Dorsolateral prefrontal cortex (tissue), 120 donors: ENCODE measurements at regions of chr16 and their contacts with region 1.

Region 1: DNA sequence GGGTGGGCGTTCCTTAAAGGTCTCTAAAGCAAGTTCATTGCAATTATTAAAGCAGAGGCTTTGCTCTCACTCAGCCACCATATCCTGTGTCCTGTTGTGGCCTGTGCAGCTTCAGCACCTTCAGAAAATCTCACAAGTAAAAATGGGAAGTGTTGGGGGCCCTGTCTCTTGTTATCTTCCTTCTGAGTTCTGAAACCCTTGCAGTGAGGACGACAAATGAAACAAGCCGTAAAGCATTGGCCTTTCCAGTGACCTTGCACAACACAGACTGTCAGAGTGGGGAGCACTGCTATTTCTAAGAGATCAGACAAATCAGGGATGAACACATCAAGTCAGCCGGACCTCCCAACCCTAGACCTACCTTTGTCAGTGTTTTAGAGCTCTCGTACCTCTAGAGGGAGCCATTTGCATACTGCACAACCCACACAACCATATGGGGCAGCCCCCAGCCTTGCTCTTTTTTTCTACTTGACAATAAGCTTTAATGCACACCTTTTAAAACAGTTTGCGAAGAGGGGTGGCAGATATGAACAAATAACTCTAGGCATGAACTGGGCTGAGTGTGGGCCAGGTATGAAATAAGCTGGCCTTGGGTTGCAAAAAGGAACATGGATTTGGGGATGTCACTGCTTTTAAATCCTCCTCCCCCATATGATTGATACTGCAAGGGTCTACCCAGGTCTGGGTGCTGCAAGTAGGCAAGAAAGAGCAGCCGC is 89.8 kb downstream of the KATNIP start:
- DNase-seq: peak in 5 of 10 donors; percentile 16 to 58 (median 43)
- H3K4me3 ChIP-seq: no peak overlapping the region
- H3K27ac ChIP-seq: peak overlapping the region in 1 of 59 donors; percentile 14
- H3K27me3 ChIP-seq: no peaks in the 10 kb centered on the region
- CTCF ChIP-seq: peak in 55 of 56 donors; percentile 26 to 78 (median 64)

Region 2: DNA sequence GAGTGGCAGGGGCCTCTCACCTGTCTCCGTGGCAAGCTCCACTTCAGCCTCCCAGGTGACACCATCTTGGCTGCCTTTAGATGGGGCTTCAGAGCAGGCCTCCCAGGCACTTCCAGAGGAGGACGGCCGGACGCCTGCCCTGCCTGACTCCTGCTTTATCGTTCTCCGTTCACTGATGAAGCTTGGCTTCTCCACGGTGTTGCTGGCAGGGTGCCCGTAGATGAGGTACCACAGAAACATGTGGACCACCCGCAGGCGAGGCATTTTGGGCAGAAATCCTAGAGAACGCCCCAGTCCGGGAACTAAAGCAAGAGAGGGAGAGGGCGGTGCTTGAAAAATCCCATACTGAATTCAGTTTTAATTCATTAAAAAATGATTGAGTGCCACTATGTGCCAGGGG is 144.5 kb before region 1 on chr16:
- intact Hi-C with region 1: no loop called
- DNase-seq: peak in 1 of 10 donors; percentile 67
- H3K4me3 ChIP-seq: no peak overlapping the region
- H3K27ac ChIP-seq: peak overlapping the region in 1 of 59 donors; percentile 22
- H3K27me3 ChIP-seq: no peaks in the 10 kb centered on the region
- CTCF ChIP-seq: no peak

Region 3: DNA sequence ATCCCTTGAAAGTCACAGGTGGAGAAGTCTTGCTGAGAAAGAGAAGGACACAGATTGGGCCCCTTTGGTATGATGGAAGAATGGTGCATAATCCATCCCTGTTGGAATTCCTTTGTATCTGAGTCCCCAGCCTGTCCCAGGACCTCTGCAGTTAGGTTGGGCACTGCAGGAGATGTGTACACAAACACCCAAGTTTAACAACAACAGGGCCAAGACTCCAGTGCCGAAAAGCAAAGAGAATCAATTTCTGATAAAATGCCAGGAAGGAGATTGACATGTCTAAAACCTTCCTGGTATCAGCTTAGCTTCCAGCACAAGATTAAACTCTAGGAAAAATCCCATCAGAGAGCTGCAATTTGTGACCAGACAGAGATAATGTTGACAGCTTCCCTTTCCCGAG is 56.8 kb before region 1 on chr16:
- intact Hi-C with region 1: loop called in 1 of 2 experiments (anchors 10 kb)
- DNase-seq: no peak
- H3K4me3 ChIP-seq: no peak overlapping the region
- H3K27ac ChIP-seq: no peak overlapping the region
- H3K27me3 ChIP-seq: no peaks in the 10 kb centered on the region
- CTCF ChIP-seq: no peak

Region 4: DNA sequence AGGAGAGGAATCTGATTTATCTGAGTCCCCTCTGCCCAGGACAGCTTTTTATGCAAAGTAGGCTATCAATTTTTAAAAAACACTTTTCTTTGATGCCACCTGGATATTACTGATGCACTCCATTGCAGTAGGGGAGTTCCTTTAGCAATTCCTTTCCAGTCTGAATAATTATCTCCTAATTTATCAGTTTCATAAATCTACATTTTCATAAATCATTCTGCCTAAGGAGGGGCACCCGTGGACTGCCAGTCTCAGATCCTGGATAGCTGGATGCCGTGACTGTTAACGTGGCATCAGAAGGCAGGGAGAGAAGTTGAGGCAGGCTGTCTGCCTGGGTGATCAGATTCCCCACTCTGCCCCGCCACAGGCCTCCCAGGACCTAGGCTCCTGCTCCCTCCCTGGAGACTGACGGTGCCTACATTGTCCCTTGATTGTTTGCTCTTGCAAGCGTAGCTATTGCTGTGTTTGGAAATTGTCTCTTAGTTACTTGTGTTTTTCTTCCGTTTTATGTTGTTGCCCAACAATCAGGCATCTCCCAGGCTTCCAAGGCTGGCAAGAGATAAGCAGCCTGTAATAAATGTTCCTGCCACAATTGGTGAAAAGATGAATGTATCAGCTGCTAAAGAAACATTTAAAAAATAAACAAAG is 14.5 kb before region 1 on chr16:
- intact Hi-C with region 1: no loop called
- DNase-seq: no peak
- H3K4me3 ChIP-seq: no peak overlapping the region
- H3K27ac ChIP-seq: no peak overlapping the region
- H3K27me3 ChIP-seq: no peaks in the 10 kb centered on the region
- CTCF ChIP-seq: no peak

Region 5: GRCh38 chr16:27779641-27780164 is 140.0 kb after region 1 on chr16:
- intact Hi-C with region 1: loop called in 1 of 2 experiments (anchors 10 kb)
- DNase-seq: peak in 9 of 10 donors; percentile 56 to 78 (median 69)
- H3K4me3 ChIP-seq: peak overlapping the region in 7 of 59 donors; percentile 2 to 36 (median 7)
- H3K27ac ChIP-seq: peak overlapping the region in 54 of 59 donors; percentile 3 to 84 (median 60)
- H3K27me3 ChIP-seq: no peaks in the 10 kb centered on the region
- CTCF ChIP-seq: peak in 54 of 56 donors; percentile 18 to 79 (median 58)

Region 6: DNA sequence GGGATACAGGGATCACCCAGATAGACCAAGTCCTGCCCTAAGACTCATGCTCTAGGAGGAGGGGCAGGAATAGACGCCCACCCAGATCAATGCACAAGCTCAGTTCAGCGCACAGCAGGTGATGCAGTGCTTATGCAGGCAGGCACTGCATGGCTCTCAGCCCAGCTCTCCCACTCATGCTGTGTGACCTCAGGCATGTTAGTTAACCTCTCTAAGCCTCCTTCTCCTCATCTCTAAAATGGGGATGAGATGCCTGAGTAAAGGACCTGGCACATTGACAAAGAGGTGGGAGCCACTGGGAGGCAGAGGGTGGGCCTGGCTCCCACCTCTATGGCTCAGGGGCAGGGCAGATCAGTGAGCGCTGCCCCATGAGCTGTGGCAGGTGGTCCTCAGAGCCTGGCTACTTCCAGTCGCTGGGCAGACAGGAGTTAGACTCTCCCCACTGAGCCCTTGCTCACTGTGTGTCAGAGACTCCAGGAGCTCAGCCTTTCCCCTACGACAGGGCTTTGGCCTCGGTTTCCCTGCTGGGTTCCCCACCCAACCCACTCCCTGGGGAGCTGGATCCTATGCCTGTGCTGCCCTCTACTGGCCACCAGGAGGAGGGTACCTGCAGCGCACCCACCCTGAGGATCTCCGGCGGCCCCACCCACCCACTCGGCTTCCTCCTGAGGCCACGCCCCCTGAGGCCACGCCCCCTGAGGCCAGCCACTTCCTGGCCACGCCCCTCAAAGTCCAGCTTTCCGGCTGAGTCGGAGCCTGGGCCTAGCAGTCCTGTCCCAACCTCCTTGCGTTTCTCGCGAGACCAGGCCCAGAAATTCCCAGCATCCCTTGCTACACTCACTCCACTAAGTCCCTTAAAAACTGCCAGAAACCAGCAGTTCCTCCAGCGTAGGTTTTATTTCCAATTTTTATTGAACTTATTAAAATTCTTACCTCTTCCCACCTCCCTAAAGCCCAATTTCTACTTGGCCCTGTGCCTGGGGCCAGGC is 227.7 kb after region 1 on chr16:
- intact Hi-C with region 1: loop called in 1 of 2 experiments (anchors 5 kb)
- DNase-seq: peak; percentile 5 to 67 (median 54)
- H3K4me3 ChIP-seq: no peak overlapping the region
- H3K27ac ChIP-seq: peak overlapping the region in 1 of 59 donors; percentile 7
- H3K27me3 ChIP-seq: no peaks in the 10 kb centered on the region
- CTCF ChIP-seq: peak in 55 of 56 donors; percentile 29 to 78 (median 57)

Region 7: GRCh38 chr16:27972500-27972899 is 332.8 kb after region 1 on chr16:
- intact Hi-C with region 1: loop called in 1 of 2 experiments (anchors 10 kb)
- DNase-seq: peak in 1 of 10 donors; percentile 32
- H3K4me3 ChIP-seq: no peak overlapping the region
- H3K27ac ChIP-seq: no peak overlapping the region
- H3K27me3 ChIP-seq: no peaks in the 10 kb centered on the region
- CTCF ChIP-seq: peak in 54 of 56 donors; percentile 17 to 64 (median 42)

Region 8: GRCh38 chr16:28069971-28070794 is 430.5 kb after region 1 on chr16:
- intact Hi-C with region 1: loop called (anchors 1 to 10 kb)
- DNase-seq: peak in 2 of 10 donors; percentile 29 to 33
- H3K4me3 ChIP-seq: no peak overlapping the region
- H3K27ac ChIP-seq: peak overlapping the region in 2 of 59 donors; percentile 28 to 31
- H3K27me3 ChIP-seq: no peaks in the 10 kb centered on the region
- CTCF ChIP-seq: no peak